Breast epithelium (tissue), 4 donors: ENCODE measurements at regions of chrX and their contacts with region 1.

Region 1: DNA sequence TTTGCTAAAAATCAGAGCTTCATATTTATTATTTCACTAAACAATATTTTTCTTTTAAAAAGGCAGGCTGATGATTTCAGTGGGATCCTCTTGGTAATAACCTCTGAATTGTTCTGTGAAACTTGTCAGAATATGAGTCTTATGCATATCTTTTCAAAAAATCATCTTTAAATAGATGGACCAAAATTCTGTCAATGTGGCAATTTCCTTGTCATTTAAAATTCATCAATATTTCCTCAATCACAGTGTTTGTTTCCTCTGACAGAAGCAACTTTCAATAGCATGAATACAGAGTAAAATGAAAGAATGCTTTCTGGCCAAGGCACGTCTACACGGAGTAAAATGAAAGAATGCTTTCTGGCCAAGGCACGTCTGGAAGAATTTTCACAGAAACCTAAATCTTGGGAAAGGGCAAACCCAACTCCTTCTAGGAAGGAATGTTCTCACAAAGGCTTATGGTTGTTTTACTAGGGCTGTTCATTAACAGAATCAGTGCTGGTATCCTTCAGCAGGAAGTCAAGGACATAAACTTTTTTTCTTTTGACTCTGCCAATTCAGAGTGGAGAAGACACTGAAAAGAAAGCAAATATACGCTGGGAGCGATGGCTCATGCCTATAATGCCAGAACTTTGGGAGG is 99.0 kb upstream of the GPR34 start:
- DNase-seq: no peak
- H3K4me3 ChIP-seq: peak overlapping the region in 1 of 3 donors; percentile 27
- H3K27ac ChIP-seq: no peak overlapping the region
- H3K4me1 ChIP-seq: no peaks in the 10 kb centered on the region
- H3K27me3 ChIP-seq: peaks cover 0 to 29% of the 10 kb centered on the region in 2 donors
- CTCF ChIP-seq: no peak
- POLR2A ChIP-seq: no peak

Region 2: DNA sequence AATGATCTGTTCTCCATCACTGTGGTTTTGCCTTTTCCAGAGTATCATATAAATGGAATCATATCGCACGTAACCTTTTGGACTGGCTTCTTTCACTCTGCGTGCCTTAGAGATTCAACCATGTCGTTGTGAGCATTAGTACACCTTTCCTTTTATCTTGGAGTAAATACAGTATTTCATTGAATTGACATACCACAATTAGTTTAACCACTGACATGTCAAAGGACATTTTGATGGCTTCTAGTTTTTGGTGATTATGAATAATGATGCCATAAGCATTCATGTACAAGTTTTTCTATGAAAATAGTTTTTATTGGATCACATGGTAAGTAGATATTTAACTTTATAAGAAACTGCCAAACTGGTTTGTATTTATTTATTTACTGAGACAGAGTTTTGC is 220.6 kb before region 1 on chrX:
- intact Hi-C with region 1: loop called (anchors 5 kb)
- DNase-seq: no peak
- H3K4me3 ChIP-seq: no peak overlapping the region
- H3K27ac ChIP-seq: no peak overlapping the region
- H3K4me1 ChIP-seq: no peaks in the 10 kb centered on the region
- H3K27me3 ChIP-seq: peaks cover 0 to 3% of the 10 kb centered on the region in 2 donors
- CTCF ChIP-seq: no peak
- POLR2A ChIP-seq: no peak

Region 3: GRCh38 chrX:41946989-41947612 is 357.3 kb after region 1 on chrX:
- intact Hi-C with region 1: no loop called
- DNase-seq: no peak
- H3K4me3 ChIP-seq: no peak overlapping the region
- H3K27ac ChIP-seq: no peak overlapping the region
- H3K4me1 ChIP-seq: no peaks in the 10 kb centered on the region
- H3K27me3 ChIP-seq: peaks cover 0 to 47% of the 10 kb centered on the region in 2 donors
- CTCF ChIP-seq: no peak
- POLR2A ChIP-seq: no peak